WTC11 (cell line): ENCODE measurements at regions of chr10 and their contacts with region 1.

Region 1: GRCh38 chr10:119489991-119490326 is 52.6 kb downstream of the RGS10 start:
- DNase-seq: no peak
- ATAC-seq: no peak
- H3K4me3 Mint-ChIP-seq: no peak overlapping the region
- H3K27ac Mint-ChIP-seq: no peak overlapping the region
- H3K4me1 Mint-ChIP-seq: no peaks in the 10 kb centered on the region
- H3K27me3 Mint-ChIP-seq: no peaks in the 10 kb centered on the region; the same call in 1 of the 2 replicates
- CTCF ChIP-seq: no peak

Region 2: DNA sequence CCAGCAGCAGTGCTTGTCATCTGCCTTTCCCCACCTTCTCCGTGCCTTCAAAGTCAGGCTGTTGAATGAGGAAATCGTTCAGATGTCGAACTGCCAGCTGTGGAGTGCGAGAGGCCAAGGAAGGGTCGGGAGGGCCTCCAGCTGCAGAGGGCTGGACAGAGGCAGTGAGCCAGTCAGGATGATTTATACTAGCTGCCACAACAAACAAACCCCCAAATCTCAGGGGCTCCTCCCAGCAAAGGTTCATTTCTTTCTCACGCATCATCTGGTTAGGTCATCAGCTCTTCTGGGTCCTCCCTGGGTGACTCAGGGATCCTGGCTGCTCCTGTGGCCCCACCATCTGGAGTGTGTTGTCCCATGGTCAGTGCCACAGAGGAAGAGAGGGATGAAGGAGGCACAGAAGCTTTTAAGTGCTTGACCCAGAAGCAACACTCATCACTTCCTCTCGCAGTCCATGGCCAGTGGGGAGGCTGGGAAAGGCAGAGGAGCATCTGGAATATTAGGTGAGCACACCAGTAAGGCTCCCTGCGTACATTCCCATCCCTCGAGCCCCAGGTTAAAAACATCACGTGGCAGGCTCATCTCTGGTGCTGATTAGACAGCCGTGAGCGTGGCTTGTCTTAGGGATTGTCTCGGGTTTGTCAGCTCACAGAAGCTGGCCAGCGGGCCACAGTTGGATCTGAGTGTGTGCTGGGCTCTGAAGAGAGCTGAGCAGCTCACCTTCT is 88.1 kb before region 1 on chr10:
- CTCF ChIA-PET with region 1: interaction called, 10 read pairs
- POLR2A ChIA-PET with region 1: no interaction called
- DNase-seq: no peak
- ATAC-seq: no peak
- H3K4me3 Mint-ChIP-seq: no peak overlapping the region
- H3K27ac Mint-ChIP-seq: no peak overlapping the region
- H3K4me1 Mint-ChIP-seq: no peaks in the 10 kb centered on the region
- H3K27me3 Mint-ChIP-seq: no peaks in the 10 kb centered on the region
- CTCF ChIP-seq: no peak

Region 3: GRCh38 chr10:119421887-119422681 is 67.9 kb before region 1 on chr10:
- CTCF ChIA-PET with region 1: interaction called, 16 read pairs
- POLR2A ChIA-PET with region 1: interaction called, 3 read pairs
- DNase-seq: no peak
- ATAC-seq: peak; percentile 65
- H3K4me3 Mint-ChIP-seq: no peak overlapping the region
- H3K27ac Mint-ChIP-seq: no peak overlapping the region
- H3K4me1 Mint-ChIP-seq: peaks cover 19% of the 10 kb centered on the region
- H3K27me3 Mint-ChIP-seq: no peaks in the 10 kb centered on the region
- CTCF ChIP-seq: no peak

Region 4: GRCh38 chr10:119445311-119445934 is 44.5 kb before region 1 on chr10:
- CTCF ChIA-PET with region 1: interaction called, 27 read pairs
- POLR2A ChIA-PET with region 1: no interaction called
- DNase-seq: peak; percentile 92
- ATAC-seq: peak; percentile 82
- H3K4me3 Mint-ChIP-seq: no peak overlapping the region
- H3K27ac Mint-ChIP-seq: no peak overlapping the region
- H3K4me1 Mint-ChIP-seq: peaks cover 11% of the 10 kb centered on the region
- H3K27me3 Mint-ChIP-seq: no peaks in the 10 kb centered on the region; the same call in 1 of the 2 replicates
- CTCF ChIP-seq: peak; percentile 97

Region 5: GRCh38 chr10:119457966-119458766 is 31.8 kb before region 1 on chr10:
- CTCF ChIA-PET with region 1: interaction called, 23 read pairs
- POLR2A ChIA-PET with region 1: no interaction called
- DNase-seq: no peak
- ATAC-seq: no peak; the same call in 1 of the 2 replicates
- H3K4me3 Mint-ChIP-seq: no peak overlapping the region
- H3K27ac Mint-ChIP-seq: no peak overlapping the region
- H3K4me1 Mint-ChIP-seq: peaks cover 7% of the 10 kb centered on the region; the same call in 1 of the 2 replicates
- H3K27me3 Mint-ChIP-seq: no peaks in the 10 kb centered on the region
- CTCF ChIP-seq: no peak

Region 6: DNA sequence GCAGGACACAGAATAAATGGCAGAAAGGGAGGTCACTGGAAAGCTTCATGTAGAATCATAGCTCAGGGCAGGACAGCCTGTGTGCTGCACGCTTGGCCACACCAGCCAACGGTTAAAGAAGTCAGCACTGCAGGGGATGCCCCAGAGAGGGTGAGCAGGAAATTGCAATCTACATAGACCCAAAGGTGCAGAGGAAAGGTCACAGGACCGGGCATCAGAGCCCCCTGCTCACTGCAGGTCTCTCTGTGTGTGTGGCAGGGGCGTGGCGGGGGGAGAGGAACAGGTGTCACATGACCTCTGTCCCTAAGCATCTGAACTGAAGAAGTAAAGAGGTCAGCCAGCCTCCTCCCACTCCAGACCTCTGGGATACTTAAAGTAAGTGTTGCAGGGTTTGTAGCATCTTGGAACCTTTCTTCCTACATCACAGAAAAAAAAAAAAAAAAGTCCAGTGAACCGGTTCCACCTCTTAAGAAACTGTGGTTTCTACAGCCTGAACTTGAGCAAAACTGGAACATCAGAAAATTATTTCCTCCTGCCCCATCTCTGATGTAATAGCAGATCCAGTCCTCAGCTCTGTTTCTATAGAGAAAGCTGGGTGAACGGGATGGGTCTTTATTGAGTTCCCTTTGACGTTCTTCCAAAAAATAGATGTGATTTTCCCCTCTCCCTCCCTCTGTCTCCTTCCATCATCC is 11.7 kb before region 1 on chr10:
- CTCF ChIA-PET with region 1: interaction called, 24 read pairs
- POLR2A ChIA-PET with region 1: no interaction called
- DNase-seq: no peak
- ATAC-seq: no peak
- H3K4me3 Mint-ChIP-seq: no peak overlapping the region
- H3K27ac Mint-ChIP-seq: no peak overlapping the region
- H3K4me1 Mint-ChIP-seq: peaks cover 19% of the 10 kb centered on the region
- H3K27me3 Mint-ChIP-seq: peaks cover 94% of the 10 kb centered on the region
- CTCF ChIP-seq: no peak